Transverse colon (tissue), 4 donors: ENCODE measurements at regions of chr18 and their contacts with region 1.

Region 1: GRCh38 chr18:54466248-54467005 is 108.7 kb downstream of the C18orf54 start:
- DNase-seq: no peak
- H3K4me3 ChIP-seq: no peak overlapping the region
- H3K27ac ChIP-seq: no peak overlapping the region
- H3K4me1 ChIP-seq: no peaks in the 10 kb centered on the region
- H3K27me3 ChIP-seq: no peaks in the 10 kb centered on the region
- CTCF ChIP-seq: no peak
- EP300 ChIP-seq: no peak
- POLR2A ChIP-seq: no peak

Region 2: DNA sequence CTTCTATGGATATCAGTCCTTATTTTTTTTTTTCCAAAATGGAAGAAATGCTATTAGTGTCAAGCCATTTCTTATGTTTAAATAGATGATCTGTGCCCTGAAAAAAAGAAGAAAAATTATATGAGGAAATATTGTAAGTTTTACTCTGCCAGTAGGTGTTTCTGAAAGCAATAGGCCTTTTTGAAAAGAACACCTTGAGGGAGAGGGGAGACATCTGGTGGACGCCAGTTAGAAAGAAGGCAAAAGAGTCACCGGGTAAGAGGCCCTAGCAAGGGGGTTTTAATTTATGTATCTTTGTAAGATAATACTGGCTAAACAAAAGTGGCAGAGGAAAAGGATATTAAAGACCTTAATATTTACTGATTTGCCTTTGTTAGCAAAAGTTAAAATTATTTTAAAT is 180.7 kb after region 1 on chr18:
- in situ Hi-C with region 1: loop called in 2 of 4 experiments (anchors 25 kb)
- intact Hi-C with region 1: no loop called
- DNase-seq: peak; percentile 22
- H3K4me3 ChIP-seq: no peak overlapping the region
- H3K27ac ChIP-seq: no peak overlapping the region
- H3K4me1 ChIP-seq: no peaks in the 10 kb centered on the region
- H3K27me3 ChIP-seq: no peaks in the 10 kb centered on the region
- CTCF ChIP-seq: peak in 4 of 5 experiments; percentile 31 to 60 (median 50)
- EP300 ChIP-seq: no peak
- POLR2A ChIP-seq: no peak

Region 3: GRCh38 chr18:54671291-54671881 is 205.0 kb after region 1 on chr18:
- in situ Hi-C with region 1: loop called in 1 of 4 experiments (anchors 25 kb)
- intact Hi-C with region 1: no loop called
- DNase-seq: no peak
- H3K4me3 ChIP-seq: no peak overlapping the region
- H3K27ac ChIP-seq: no peak overlapping the region
- H3K4me1 ChIP-seq: peaks cover 0 to 19% (median 7%) of the 10 kb centered on the region in 4 donors
- H3K27me3 ChIP-seq: no peaks in the 10 kb centered on the region
- CTCF ChIP-seq: peak; percentile 44 to 62 (median 59)
- EP300 ChIP-seq: no peak
- POLR2A ChIP-seq: no peak